Posterior vena cava (tissue), 2 donors: ENCODE measurements at regions of chr17 and their contacts with region 1.

Region 1: DNA sequence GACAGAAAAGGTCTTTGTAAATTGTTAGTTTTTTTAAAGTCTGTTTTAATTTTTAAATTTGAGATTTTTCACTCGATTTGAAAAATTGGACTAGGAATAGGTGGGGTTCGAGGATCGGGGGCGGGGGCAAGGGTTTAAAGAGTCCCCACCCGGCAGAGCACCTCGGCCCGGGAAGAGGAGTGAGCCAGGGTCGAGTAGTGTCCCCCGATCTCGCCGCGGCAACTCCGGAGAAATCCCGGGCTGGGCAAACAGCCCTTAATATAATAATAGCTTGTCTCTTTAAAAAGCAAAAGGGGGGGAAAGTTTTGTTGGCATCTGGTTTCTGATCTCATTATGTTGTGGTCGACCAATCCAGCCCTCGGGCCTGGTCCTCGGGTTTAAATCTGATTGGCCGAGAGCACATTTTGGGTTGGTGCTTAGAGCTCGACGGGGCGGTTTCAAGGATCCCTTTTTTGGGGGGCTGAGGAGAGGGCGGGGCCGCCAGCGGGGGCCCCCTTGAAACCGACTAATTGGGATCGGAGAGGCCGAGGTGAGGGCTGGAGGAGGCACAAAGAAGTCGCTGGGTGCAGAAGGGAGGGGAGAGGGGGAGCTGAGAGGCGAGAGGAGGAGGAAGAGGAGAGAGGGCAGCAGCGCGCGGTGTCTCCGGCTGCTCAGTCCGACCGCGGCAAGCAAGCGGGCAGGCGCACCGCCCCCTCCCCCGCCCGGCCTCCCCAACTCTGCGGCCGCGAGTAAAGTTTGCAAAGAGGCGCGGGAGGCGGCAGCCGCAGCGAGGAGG is at the start of gene FZD2:
- DNase-seq: peak; percentile 94
- total RNA-seq, gene FZD2: 10.4 to 12.6 TPM

Region 2: DNA sequence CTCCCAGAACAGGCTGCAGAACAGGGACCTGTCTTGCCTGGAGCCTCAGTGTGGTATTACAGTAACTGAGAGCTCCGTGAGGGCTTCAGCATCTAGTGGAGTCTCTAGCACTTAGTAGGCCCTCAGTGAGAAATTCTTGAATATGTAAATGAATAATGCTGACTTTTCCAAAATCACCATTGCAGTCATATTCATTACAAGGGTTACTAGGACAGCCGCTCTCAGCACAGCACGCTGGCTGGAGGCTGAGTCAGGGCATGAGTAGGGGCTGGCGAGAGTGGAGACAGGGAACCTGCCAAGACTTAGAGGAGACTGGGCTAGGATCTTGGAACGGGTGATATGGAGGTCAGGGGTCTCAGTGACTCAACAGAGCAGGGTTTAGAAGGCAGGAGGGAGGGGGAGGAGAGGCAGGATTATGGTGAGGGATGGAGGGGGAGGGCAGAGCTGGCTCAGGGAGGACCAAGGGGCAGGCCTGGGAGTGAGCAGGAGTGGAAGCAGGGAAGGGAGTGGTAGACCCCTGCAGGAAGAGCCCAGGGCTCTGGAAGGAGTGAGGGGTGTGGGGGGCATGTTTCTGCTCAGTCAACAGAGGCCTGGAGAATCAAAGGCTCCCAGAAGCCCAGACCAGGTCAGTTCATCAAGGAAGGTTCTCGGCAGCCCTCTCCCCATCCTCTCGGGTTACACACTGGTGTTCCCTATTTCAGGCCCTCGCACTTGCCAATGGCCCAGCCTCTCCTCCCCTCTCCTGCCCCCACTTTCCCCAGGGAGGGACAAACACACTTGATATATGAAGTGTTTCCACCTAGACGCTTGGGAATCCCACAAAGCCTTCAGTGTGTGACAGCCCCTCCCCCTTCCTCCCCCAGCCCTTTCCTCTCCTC is 42.5 kb after region 1 on chr17:
- intact Hi-C with region 1: loop called in 1 of 2 experiments (anchors 5 kb)
- DNase-seq: peak; percentile 95

Region 3: DNA sequence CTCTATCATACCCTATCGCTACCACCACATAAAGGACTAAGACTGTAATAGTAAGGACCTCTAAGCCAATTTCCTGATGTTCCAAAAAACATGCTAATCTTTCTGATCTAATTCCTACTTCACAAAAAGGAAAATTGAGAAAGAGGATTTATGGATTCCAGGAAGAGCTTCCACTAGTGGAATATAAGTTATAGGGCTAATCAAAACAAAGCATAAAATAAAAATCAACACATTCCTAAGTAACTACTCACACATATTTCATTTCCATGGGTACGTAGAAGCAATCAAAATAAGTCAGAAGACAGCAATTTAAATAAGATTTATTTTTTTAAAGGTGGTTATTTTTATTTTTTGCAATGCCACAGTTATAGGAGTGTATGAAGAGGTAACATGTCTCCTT is 120.1 kb after region 1 on chr17:
- intact Hi-C with region 1: no loop called
- DNase-seq: no peak